Posterior vena cava (tissue), 2 donors: ENCODE measurements at regions of chr11 and their contacts with region 1.

Region 1: GRCh38 chr11:100619484-100619883 is 67.6 kb upstream of the ARHGAP42 start:
- DNase-seq: no peak

Region 2: DNA sequence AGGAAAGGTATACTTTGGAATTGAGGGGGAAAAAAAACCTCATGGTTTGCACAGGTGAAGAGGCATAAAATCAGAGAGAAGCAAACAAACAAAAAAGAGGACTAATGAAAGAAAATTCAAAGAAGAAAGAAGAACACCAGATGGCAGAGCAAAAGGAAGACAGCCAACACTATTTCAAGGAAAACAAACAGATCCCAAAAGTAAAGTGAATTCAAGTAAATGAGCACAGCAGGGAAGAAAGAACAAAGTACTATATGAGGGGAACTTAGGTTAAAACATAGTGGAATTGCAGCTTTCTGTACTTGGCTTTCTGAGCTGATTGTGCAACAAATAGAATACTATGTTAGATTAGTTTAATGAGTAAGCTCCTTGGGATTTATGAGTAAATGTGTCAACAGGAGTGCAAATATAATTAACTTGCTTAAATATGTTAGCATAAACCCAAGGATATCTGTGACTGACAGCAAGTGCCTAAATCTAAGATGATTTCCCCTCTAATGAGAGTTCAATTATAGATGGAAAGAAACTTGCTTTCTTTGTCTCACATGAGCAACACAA is 2003.3 kb before region 1 on chr11:
- intact Hi-C with region 1: loop called in 1 of 2 experiments (anchors 5 kb)
- DNase-seq: no peak

Region 3: DNA sequence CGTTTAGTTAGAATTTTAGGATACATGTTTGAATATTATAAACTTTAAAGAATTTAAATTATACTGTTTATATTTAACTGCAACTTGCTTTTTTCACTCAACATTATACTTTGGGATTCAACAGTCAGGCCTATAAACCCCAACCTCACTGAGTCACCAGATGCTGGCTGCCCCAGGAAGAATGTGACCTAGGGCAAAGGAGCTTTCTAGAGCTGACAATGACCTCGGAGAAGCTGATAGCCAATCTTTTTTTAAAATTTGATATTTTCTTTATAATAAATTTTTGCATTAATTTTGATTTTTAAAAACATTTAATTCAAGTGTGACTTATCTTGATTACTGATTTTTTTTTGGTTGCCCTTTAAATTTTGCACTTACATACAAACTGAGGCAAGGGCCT is 681.0 kb after region 1 on chr11:
- intact Hi-C with region 1: loop called in 1 of 2 experiments (anchors 5 kb)
- DNase-seq: no peak